GM18951 (cell line): ENCODE measurements at regions of chr1 and their contacts with region 1.

Region 1: GRCh38 chr1:221203224-221204054 is 324.2 kb downstream of the HLX start:
- POLR2A ChIP-seq: no peak

Region 2: GRCh38 chr1:220879509-220880361 is 323.7 kb before region 1 on chr1:
- in situ Hi-C with region 1: loop called (anchors 10 kb)
- POLR2A ChIP-seq: no peak